MCF 10A (cell line): ENCODE measurements at regions of chr11 and their contacts with region 1.

Region 1: GRCh38 chr11:86955361-86956120 is at the start of gene FZD4:
- DNase-seq: peak; percentile 89
- H3K4me3 Mint-ChIP-seq: peak within 1 kb of the TSS; percentile 99
- H3K27ac Mint-ChIP-seq: peak within 1 kb of the TSS; percentile 84
- H3K4me1 Mint-ChIP-seq: peaks cover 13% of the 10 kb centered on the region
- H3K27me3 Mint-ChIP-seq: no peaks in the 10 kb centered on the region
- CTCF ChIP-seq: no peak
- total RNA-seq, gene FZD4: 0.34 and 0.35 TPM in 2 replicates

Region 2: GRCh38 chr11:86938900-86939880 is 16.4 kb before region 1 on chr11:
- CTCF ChIA-PET with region 1: interaction called, 14 read pairs
- POLR2A ChIA-PET with region 1: interaction called, 15 read pairs
- intact Hi-C with region 1: no loop called
- DNase-seq: peak; percentile 60
- H3K4me3 Mint-ChIP-seq: no peak overlapping the region
- H3K27ac Mint-ChIP-seq: no peak overlapping the region
- H3K4me1 Mint-ChIP-seq: peaks cover 8% of the 10 kb centered on the region
- H3K27me3 Mint-ChIP-seq: no peaks in the 10 kb centered on the region
- CTCF ChIP-seq: peak; percentile 54

Region 3: GRCh38 chr11:86969258-86969657 is 13.7 kb after region 1 on chr11:
- CTCF ChIA-PET with region 1: interaction called, 11 read pairs
- POLR2A ChIA-PET with region 1: interaction called, 4 read pairs
- intact Hi-C with region 1: no loop called
- DNase-seq: no peak
- H3K4me3 Mint-ChIP-seq: no peak overlapping the region
- H3K27ac Mint-ChIP-seq: no peak overlapping the region
- H3K4me1 Mint-ChIP-seq: no peaks in the 10 kb centered on the region
- H3K27me3 Mint-ChIP-seq: no peaks in the 10 kb centered on the region
- CTCF ChIP-seq: no peak

Region 4: GRCh38 chr11:86978756-86979608 is 23.4 kb after region 1 on chr11:
- CTCF ChIA-PET with region 1: interaction called, 30 read pairs
- POLR2A ChIA-PET with region 1: interaction called, 9 read pairs
- intact Hi-C with region 1: no loop called
- DNase-seq: peak; percentile 60
- H3K4me3 Mint-ChIP-seq: no peak overlapping the region
- H3K27ac Mint-ChIP-seq: no peak overlapping the region
- H3K4me1 Mint-ChIP-seq: peaks cover 12% of the 10 kb centered on the region
- H3K27me3 Mint-ChIP-seq: no peaks in the 10 kb centered on the region
- CTCF ChIP-seq: peak; percentile 66

Region 5: GRCh38 chr11:87037450-87038234 is 82.1 kb after region 1 on chr11 and contains the start of gene TMEM135:
- CTCF ChIA-PET with region 1: interaction called, 4 read pairs
- POLR2A ChIA-PET with region 1: interaction called, 14 read pairs
- intact Hi-C with region 1: no loop called
- DNase-seq: peak; percentile 95
- H3K4me3 Mint-ChIP-seq: peak within 1 kb of the TSS; percentile 94
- H3K27ac Mint-ChIP-seq: peak within 1 kb of the TSS; percentile 76
- H3K4me1 Mint-ChIP-seq: peaks cover 36% of the 10 kb centered on the region
- H3K27me3 Mint-ChIP-seq: no peaks in the 10 kb centered on the region
- CTCF ChIP-seq: no peak
- total RNA-seq, gene TMEM135: 10.7 and 17.4 TPM in 2 replicates

Region 6: DNA sequence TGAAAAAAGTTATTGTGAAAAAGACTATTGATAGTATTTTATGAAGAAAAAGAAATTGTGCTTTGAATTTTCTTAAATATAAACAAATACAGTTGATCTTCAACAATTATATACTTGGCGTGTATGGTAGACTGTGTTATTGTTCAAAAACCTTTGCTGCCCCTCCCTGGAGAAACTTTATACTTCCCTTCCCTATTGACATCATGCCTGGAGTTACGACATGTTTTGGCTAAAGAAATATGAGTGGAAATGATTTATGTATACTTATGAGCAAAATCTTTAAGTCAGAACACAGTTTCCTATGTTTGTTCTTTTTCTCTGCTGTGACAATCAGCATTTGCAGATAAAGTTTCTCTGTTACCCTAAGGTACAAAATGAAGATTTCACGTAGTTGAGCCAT is 326.0 kb after region 1 on chr11:
- CTCF ChIA-PET with region 1: interaction called, 24 read pairs
- POLR2A ChIA-PET with region 1: interaction called, 3 read pairs
- intact Hi-C with region 1: no loop called
- DNase-seq: peak; percentile 85
- H3K4me3 Mint-ChIP-seq: no peak overlapping the region
- H3K27ac Mint-ChIP-seq: no peak overlapping the region
- H3K4me1 Mint-ChIP-seq: peaks cover 5% of the 10 kb centered on the region
- H3K27me3 Mint-ChIP-seq: no peaks in the 10 kb centered on the region
- CTCF ChIP-seq: peak; percentile 29

Region 7: GRCh38 chr11:87290304-87290922 is 334.9 kb after region 1 on chr11:
- CTCF ChIA-PET with region 1: interaction called, 11 read pairs
- POLR2A ChIA-PET with region 1: interaction called, 4 read pairs
- intact Hi-C with region 1: no loop called
- DNase-seq: peak; percentile 70
- H3K4me3 Mint-ChIP-seq: no peak overlapping the region
- H3K27ac Mint-ChIP-seq: no peak overlapping the region
- H3K4me1 Mint-ChIP-seq: peaks cover 4% of the 10 kb centered on the region
- H3K27me3 Mint-ChIP-seq: no peaks in the 10 kb centered on the region
- CTCF ChIP-seq: peak; percentile 64

Region 8: GRCh38 chr11:87368858-87369480 is 413.4 kb after region 1 on chr11:
- CTCF ChIA-PET with region 1: no interaction called
- POLR2A ChIA-PET with region 1: no interaction called
- intact Hi-C with region 1: no loop called
- DNase-seq: no peak
- H3K4me3 Mint-ChIP-seq: no peak overlapping the region
- H3K27ac Mint-ChIP-seq: no peak overlapping the region
- H3K4me1 Mint-ChIP-seq: no peaks in the 10 kb centered on the region
- H3K27me3 Mint-ChIP-seq: no peaks in the 10 kb centered on the region
- CTCF ChIP-seq: no peak